B cell (primary cell): ENCODE measurements at regions of chr4 and their contacts with region 1.

Region 1: GRCh38 chr4:25842229-25842845 is 20.5 kb downstream of the SEL1L3 start:
- DNase-seq: peak; percentile 85
- ATAC-seq: peak; percentile 90
- H3K4me3 ChIP-seq: peak overlapping the region in 1 of 5 experiments; percentile 12
- H3K4me3 Mint-ChIP-seq: peak overlapping the region; percentile 38
- H3K27ac ChIP-seq: peak overlapping the region; percentile 13 to 61
- H3K27ac Mint-ChIP-seq: peak overlapping the region; percentile 57
- H3K4me1 ChIP-seq: peaks cover 30 to 53% of the 10 kb centered on the region in 2 donors
- H3K4me1 Mint-ChIP-seq: peaks cover 77% of the 10 kb centered on the region
- H3K27me3 ChIP-seq: no peaks in the 10 kb centered on the region
- H3K27me3 Mint-ChIP-seq: no peaks in the 10 kb centered on the region
- CTCF ChIP-seq: peak; percentile 73

Region 2: GRCh38 chr4:25857403-25857802 is 15.1 kb after region 1 on chr4:
- CTCF ChIA-PET with region 1: interaction called, 26 read pairs
- POLR2A ChIA-PET with region 1: interaction called, 11 read pairs
- intact Hi-C with region 1: loop called (anchors 1 kb)
- DNase-seq: peak; percentile 50
- ATAC-seq: no peak
- H3K4me3 ChIP-seq: no peak overlapping the region
- H3K4me3 Mint-ChIP-seq: peak overlapping the region; percentile 54
- H3K27ac ChIP-seq: peak overlapping the region; percentile 45 to 88
- H3K27ac Mint-ChIP-seq: peak overlapping the region; percentile 84
- H3K4me1 ChIP-seq: peaks cover 84 to 85% of the 10 kb centered on the region in 2 donors
- H3K4me1 Mint-ChIP-seq: peaks cover 90% of the 10 kb centered on the region
- H3K27me3 ChIP-seq: no peaks in the 10 kb centered on the region
- H3K27me3 Mint-ChIP-seq: no peaks in the 10 kb centered on the region
- CTCF ChIP-seq: no peak

Region 3: DNA sequence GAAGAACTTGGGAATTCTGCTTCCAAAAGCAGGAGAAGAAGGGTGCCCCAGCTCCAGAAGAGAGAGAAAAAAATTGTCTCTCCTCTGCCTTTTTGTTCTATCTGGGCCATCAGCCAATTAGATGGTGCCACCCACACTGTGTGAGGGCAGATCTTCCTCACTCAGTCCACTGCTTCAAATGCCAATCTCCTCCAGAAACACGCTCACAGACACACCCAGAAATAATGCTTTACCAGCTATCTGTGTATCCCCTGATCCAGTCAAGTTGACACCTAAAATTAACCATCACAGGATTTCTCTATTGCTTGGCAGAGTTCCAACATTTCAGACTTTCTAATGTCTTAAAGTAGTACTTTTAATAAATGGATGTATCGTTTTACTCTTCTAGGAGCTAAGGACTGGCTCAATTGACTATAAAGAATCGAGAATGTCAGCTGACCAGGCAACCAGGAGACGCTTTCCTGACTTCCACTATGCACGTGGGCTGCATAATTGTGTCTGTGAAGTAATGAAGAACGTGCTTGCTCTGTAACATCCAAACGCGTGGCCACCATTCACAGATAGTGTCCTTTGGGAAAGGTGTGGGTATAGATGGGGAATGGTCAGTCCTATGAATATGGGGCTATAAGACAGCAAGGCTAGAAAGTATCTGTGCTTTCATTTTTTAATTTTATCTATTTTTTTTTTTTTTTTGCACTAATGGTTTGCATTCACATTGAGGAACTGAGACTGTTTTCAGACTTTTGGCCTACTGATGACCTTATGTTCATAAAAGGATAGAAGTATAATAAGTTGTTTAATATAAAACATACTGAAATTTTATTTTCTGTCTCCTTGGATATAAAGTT is 61.8 kb after region 1 on chr4:
- CTCF ChIA-PET with region 1: interaction called, 49 read pairs
- POLR2A ChIA-PET with region 1: no interaction called
- intact Hi-C with region 1: no loop called
- DNase-seq: peak; percentile 66
- ATAC-seq: peak; percentile 79
- H3K4me3 ChIP-seq: peak overlapping the region in 1 of 5 experiments; percentile 36
- H3K4me3 Mint-ChIP-seq: peak overlapping the region; percentile 74
- H3K27ac ChIP-seq: peak overlapping the region; percentile 61 to 85
- H3K27ac Mint-ChIP-seq: peak overlapping the region; percentile 91
- H3K4me1 ChIP-seq: peaks cover 36 to 43% of the 10 kb centered on the region in 2 donors
- H3K4me1 Mint-ChIP-seq: peaks cover 54% of the 10 kb centered on the region
- H3K27me3 ChIP-seq: no peaks in the 10 kb centered on the region
- H3K27me3 Mint-ChIP-seq: no peaks in the 10 kb centered on the region
- CTCF ChIP-seq: no peak

Region 4: GRCh38 chr4:25925486-25926201 is 83.3 kb after region 1 on chr4:
- CTCF ChIA-PET with region 1: interaction called, 22 read pairs
- POLR2A ChIA-PET with region 1: interaction called, 3 read pairs
- intact Hi-C with region 1: loop called (anchors 5 kb)
- DNase-seq: peak; percentile 59
- ATAC-seq: peak; percentile 28
- H3K4me3 ChIP-seq: no peak overlapping the region
- H3K4me3 Mint-ChIP-seq: no peak overlapping the region
- H3K27ac ChIP-seq: no peak overlapping the region
- H3K27ac Mint-ChIP-seq: no peak overlapping the region
- H3K4me1 ChIP-seq: peaks cover 0 to 2% of the 10 kb centered on the region in 2 donors
- H3K4me1 Mint-ChIP-seq: peaks cover 7% of the 10 kb centered on the region
- H3K27me3 ChIP-seq: no peaks in the 10 kb centered on the region
- H3K27me3 Mint-ChIP-seq: no peaks in the 10 kb centered on the region
- CTCF ChIP-seq: peak; percentile 70

Region 5: DNA sequence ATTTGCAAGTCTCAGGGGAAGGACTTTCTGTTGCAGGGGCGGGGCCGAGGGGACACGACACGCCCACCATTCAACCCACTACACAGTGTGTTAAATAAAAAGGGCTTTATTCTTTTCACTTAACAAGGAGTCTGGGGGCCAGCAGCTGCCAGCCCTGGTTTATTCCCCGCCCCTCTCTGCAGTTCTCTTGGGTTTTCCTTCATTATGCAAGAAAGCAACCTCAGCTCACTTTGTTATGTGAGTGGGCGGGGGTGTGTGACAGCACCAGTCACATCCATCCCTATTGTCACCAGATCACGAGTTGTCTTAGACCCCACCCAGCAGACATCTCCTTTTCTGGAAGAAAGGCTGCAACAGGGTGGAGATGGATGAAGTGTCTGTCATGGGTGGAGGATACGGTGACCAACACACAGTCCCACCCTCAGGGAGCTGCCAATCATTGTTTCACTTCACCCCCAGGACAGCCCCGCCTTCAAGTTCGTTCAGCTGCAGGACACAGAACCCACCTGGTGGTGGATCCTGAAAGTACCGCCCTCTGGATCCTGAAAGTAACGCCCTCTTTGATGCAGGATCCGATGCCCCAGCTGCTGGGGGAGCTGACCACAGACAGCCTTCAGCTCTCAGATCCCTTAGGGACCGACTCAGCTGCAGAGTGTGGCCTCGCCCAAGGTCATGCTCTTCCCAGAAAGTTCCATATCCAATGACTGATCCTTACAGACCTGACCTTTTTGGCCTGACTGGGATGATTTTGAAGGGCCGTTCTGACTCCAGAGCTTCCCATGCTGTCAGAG is 151.3 kb after region 1 on chr4:
- CTCF ChIA-PET with region 1: interaction called, 38 read pairs
- POLR2A ChIA-PET with region 1: no interaction called
- intact Hi-C with region 1: loop called (anchors 1 kb)
- DNase-seq: peak; percentile 33
- ATAC-seq: peak; percentile 39
- H3K4me3 ChIP-seq: no peak overlapping the region
- H3K4me3 Mint-ChIP-seq: no peak overlapping the region
- H3K27ac ChIP-seq: no peak overlapping the region
- H3K27ac Mint-ChIP-seq: no peak overlapping the region
- H3K4me1 ChIP-seq: peaks cover 0 to 5% of the 10 kb centered on the region in 2 donors
- H3K4me1 Mint-ChIP-seq: peaks cover 8% of the 10 kb centered on the region
- H3K27me3 ChIP-seq: peaks cover 0 to 2% (median 0%) of the 10 kb centered on the region in 4 experiments
- H3K27me3 Mint-ChIP-seq: peaks cover 5% of the 10 kb centered on the region
- CTCF ChIP-seq: peak; percentile 31

Region 6: DNA sequence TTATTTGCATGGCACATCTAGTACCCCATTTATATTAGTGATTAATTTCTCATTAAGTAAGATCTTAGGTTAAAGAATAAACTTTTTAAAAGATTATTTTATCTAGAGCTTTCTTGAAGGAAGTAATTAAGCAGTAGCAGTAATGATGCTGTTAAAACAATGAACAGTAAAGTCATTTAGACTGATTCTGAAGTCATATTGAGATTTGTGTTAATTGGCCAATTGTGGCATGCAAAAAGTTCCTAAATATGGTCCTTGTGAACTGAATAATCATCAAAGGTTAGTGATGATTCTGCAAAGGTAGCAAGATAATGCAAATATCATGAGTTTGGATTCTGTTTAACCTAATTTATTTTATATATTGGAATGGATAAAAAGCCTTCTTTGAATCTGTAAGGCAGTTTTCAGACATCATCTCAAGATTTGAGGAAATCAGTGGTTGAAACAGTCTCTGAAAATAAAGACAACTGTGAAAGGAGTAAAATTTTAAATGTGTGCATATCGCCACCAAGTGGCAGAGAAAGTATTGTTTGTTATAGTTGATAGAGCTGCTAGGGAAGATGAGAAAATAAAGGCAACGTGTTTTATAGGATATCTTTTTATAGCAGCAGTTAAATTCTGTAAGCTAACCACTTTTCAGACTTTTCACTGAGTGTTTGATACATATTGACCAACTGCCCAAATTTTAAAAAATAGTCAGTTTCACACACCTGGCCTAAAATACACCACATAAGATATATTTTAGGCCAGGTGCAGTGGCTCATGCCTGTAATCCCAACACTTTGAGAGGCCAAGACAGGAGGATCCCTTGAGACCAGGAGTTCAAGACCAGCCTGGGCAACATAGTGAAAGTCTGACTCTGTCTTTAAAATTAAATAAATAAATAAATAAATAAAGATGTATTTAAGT is 568.3 kb after region 1 on chr4:
- CTCF ChIA-PET with region 1: interaction called, 13 read pairs
- POLR2A ChIA-PET with region 1: no interaction called
- intact Hi-C with region 1: loop called (anchors 1 kb)
- DNase-seq: peak; percentile 68
- ATAC-seq: peak; percentile 21
- H3K4me3 ChIP-seq: no peak overlapping the region
- H3K4me3 Mint-ChIP-seq: no peak overlapping the region
- H3K27ac ChIP-seq: no peak overlapping the region
- H3K27ac Mint-ChIP-seq: no peak overlapping the region
- H3K4me1 ChIP-seq: no peaks in the 10 kb centered on the region
- H3K4me1 Mint-ChIP-seq: no peaks in the 10 kb centered on the region
- H3K27me3 ChIP-seq: no peaks in the 10 kb centered on the region
- H3K27me3 Mint-ChIP-seq: no peaks in the 10 kb centered on the region
- CTCF ChIP-seq: peak; percentile 81

Region 7: DNA sequence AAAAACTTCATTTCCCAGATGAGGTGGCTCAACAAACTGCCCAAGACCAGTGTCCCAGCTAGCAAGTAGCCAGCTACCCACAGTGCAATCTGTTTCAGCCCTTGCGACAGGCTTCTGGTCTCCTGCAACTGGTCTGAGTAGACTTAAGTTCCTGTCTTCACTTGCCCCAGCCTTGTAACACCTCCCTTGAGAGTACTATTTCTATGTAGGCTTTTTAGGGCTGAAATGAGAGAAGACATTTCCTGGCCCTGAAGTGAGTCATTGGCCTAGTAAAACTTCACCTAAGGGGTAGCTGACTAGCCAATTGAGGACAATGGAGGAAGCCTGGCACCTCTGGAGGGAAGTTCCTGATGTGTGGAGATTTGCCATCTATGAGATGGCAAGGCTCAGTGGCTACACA is 938.2 kb after region 1 on chr4:
- CTCF ChIA-PET with region 1: no interaction called
- POLR2A ChIA-PET with region 1: no interaction called
- intact Hi-C with region 1: no loop called
- DNase-seq: no peak
- ATAC-seq: no peak
- H3K4me3 ChIP-seq: no peak overlapping the region
- H3K4me3 Mint-ChIP-seq: no peak overlapping the region
- H3K27ac ChIP-seq: no peak overlapping the region
- H3K27ac Mint-ChIP-seq: no peak overlapping the region
- H3K4me1 ChIP-seq: peaks cover 4 to 7% of the 10 kb centered on the region in 2 donors
- H3K4me1 Mint-ChIP-seq: peaks cover 12% of the 10 kb centered on the region
- H3K27me3 ChIP-seq: no peaks in the 10 kb centered on the region
- H3K27me3 Mint-ChIP-seq: no peaks in the 10 kb centered on the region
- CTCF ChIP-seq: no peak